Naive thymus-derived CD4-positive, alpha-beta T cell (primary cell): ENCODE measurements at regions of chr17 and their contacts with region 1.

Region 1: GRCh38 chr17:42819944-42820535 is 4.0 kb downstream of the BECN1 start:
- DNase-seq: peak; percentile 16 to 57 (median 34)
- ATAC-seq: no peak
- H3K4me3 ChIP-seq: no peak overlapping the region
- H3K4me3 Mint-ChIP-seq: peak overlapping the region in 2 of 10 donors; percentile 1 to 22
- H3K27ac ChIP-seq: peak overlapping the region; percentile 40
- H3K27ac Mint-ChIP-seq: peak overlapping the region in 4 of 9 donors; percentile 6 to 43 (median 27)
- H3K4me1 ChIP-seq: peaks cover 6 to 12% of the 10 kb centered on the region in 2 donors
- H3K4me1 Mint-ChIP-seq: peaks cover 19 to 42% (median 28%) of the 10 kb centered on the region in 7 donors
- H3K27me3 ChIP-seq: no peaks in the 10 kb centered on the region
- H3K27me3 Mint-ChIP-seq: no peaks in the 10 kb centered on the region

Region 2: GRCh38 chr17:42502091-42502490 is 317.9 kb before region 1 on chr17:
- CTCF ChIA-PET with region 1: no interaction called
- POLR2A ChIA-PET with region 1: no interaction called
- intact Hi-C with region 1: no loop called
- DNase-seq: no peak
- ATAC-seq: no peak
- H3K4me3 ChIP-seq: no peak overlapping the region
- H3K4me3 Mint-ChIP-seq: no peak overlapping the region
- H3K27ac ChIP-seq: no peak overlapping the region
- H3K27ac Mint-ChIP-seq: no peak overlapping the region
- H3K4me1 ChIP-seq: no peaks in the 10 kb centered on the region
- H3K4me1 Mint-ChIP-seq: no peaks in the 10 kb centered on the region
- H3K27me3 ChIP-seq: no peaks in the 10 kb centered on the region
- H3K27me3 Mint-ChIP-seq: no peaks in the 10 kb centered on the region

Region 3: GRCh38 chr17:42591411-42591810 is 228.6 kb before region 1 on chr17:
- CTCF ChIA-PET with region 1: no interaction called
- POLR2A ChIA-PET with region 1: no interaction called
- intact Hi-C with region 1: no loop called
- DNase-seq: no peak
- ATAC-seq: no peak
- H3K4me3 ChIP-seq: no peak overlapping the region
- H3K4me3 Mint-ChIP-seq: no peak overlapping the region
- H3K27ac ChIP-seq: no peak overlapping the region
- H3K27ac Mint-ChIP-seq: no peak overlapping the region
- H3K4me1 ChIP-seq: no peaks in the 10 kb centered on the region
- H3K4me1 Mint-ChIP-seq: peaks cover 5 to 32% (median 22%) of the 10 kb centered on the region in 7 donors
- H3K27me3 ChIP-seq: no peaks in the 10 kb centered on the region
- H3K27me3 Mint-ChIP-seq: no peaks in the 10 kb centered on the region

Region 4: DNA sequence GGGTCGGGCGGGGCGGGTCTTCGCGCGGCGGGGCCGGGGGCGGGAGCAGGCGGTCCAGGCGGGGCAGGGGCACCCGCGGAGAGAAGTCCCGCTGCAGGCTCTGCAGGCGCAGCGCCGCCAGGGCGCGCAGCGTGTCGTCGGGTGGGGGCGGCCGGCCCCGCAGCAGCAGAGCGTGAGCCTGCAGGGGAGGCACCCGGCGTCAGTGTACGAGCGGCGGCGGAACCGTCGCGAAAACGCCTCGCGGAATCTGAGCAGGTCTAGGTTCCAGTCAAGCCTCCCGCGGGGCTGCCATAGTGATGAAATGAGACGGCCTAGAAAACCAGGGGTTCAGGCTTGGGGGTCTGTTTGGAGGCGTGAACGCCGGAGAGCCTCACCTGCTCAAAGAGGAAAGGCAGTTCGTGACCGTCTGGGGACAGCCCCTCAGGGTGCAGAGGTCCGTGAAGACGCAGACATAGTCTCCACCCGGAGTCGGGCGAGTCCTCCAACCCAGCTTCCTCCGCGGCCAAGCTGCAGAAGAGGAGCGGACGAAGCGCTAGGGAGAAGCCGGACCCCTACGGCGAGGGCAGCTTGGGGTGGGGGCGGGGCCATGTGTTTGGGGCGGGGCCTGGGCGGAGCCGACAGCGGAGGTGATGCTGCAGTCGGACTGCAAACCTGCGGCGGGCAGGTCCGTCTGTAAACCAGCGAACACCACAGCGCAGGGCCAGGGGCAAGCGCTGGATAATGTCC is 149.7 kb before region 1 on chr17:
- CTCF ChIA-PET with region 1: no interaction called
- POLR2A ChIA-PET with region 1: interaction called, 3 read pairs
- intact Hi-C with region 1: loop called in 1 of 2 experiments (anchors 2 kb)
- DNase-seq: peak in 8 of 9 donors; percentile 30 to 57 (median 44)
- ATAC-seq: peak; percentile 86
- H3K4me3 ChIP-seq: peak overlapping the region; percentile 47
- H3K4me3 Mint-ChIP-seq: peak overlapping the region; percentile 55 to 85 (median 79)
- H3K27ac ChIP-seq: no peak overlapping the region
- H3K27ac Mint-ChIP-seq: peak overlapping the region in 5 of 9 donors; percentile 18 to 74 (median 39)
- H3K4me1 ChIP-seq: peaks cover 2 to 20% of the 10 kb centered on the region in 2 donors
- H3K4me1 Mint-ChIP-seq: peaks cover 7 to 30% (median 24%) of the 10 kb centered on the region in 7 donors
- H3K27me3 ChIP-seq: peaks cover 0 to 28% of the 10 kb centered on the region in 2 donors
- H3K27me3 Mint-ChIP-seq: peaks cover 19 to 58% (median 26%) of the 10 kb centered on the region in 5 donors

Region 5: DNA sequence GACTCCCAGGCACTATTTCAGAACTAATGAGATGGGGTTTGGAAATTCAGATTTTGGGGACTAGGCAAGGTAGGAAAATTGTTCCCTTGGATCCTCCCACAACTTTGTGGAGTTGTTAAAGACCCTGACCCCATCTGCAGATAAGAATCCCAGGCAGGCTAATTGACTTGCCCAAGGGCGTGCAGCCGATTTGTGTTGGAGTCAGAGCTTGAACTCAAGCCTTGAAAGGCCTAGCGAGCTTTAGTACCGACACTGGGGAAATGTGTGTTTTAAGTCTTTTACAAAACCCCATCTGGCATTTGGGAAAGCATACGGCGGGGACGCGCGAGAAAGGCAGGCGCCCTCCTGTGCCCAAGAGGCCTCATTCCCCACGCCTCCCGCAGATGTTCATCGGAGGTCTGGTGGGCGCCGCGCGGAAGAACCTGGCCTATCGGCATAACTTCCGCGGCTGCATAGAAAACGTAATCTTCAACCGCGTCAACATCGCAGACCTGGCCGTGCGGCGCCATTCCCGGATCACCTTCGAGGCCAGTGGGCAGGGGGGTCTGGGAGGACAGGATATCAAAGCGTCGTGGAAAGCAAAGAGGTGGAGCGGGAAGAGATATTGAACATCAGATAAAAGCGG is 133.4 kb before region 1 on chr17:
- CTCF ChIA-PET with region 1: no interaction called
- POLR2A ChIA-PET with region 1: no interaction called
- intact Hi-C with region 1: no loop called
- DNase-seq: no peak
- ATAC-seq: no peak
- H3K4me3 ChIP-seq: no peak overlapping the region
- H3K4me3 Mint-ChIP-seq: no peak overlapping the region
- H3K27ac ChIP-seq: no peak overlapping the region
- H3K27ac Mint-ChIP-seq: no peak overlapping the region
- H3K4me1 ChIP-seq: peaks cover 9 to 10% of the 10 kb centered on the region in 2 donors
- H3K4me1 Mint-ChIP-seq: peaks cover 15 to 22% (median 18%) of the 10 kb centered on the region in 7 donors
- H3K27me3 ChIP-seq: peaks cover under 1 to 4% of the 10 kb centered on the region in 2 donors
- H3K27me3 Mint-ChIP-seq: peaks cover 13 to 37% (median 15%) of the 10 kb centered on the region in 5 donors

Region 6: GRCh38 chr17:42744806-42745617 is 75.0 kb before region 1 on chr17 and contains the start of gene EZH1:
- CTCF ChIA-PET with region 1: no interaction called
- POLR2A ChIA-PET with region 1: no interaction called
- intact Hi-C with region 1: loop called in 1 of 2 experiments (anchors 1 kb)
- DNase-seq: peak; percentile 88 to 96 (median 94)
- ATAC-seq: peak; percentile 97
- H3K4me3 ChIP-seq: peak within 1 kb of the TSS; percentile 78
- H3K4me3 Mint-ChIP-seq: peak within 1 kb of the TSS; percentile 83 to 99 (median 94)
- H3K27ac ChIP-seq: peak within 1 kb of the TSS; percentile 90
- H3K27ac Mint-ChIP-seq: peak within 1 kb of the TSS; percentile 86 to 97 (median 94)
- H3K4me1 ChIP-seq: peaks cover 12 to 16% of the 10 kb centered on the region in 2 donors
- H3K4me1 Mint-ChIP-seq: peaks cover 15 to 34% (median 22%) of the 10 kb centered on the region in 7 donors
- H3K27me3 ChIP-seq: no peaks in the 10 kb centered on the region
- H3K27me3 Mint-ChIP-seq: peaks cover 0 to 41% (median 11%) of the 10 kb centered on the region in 5 donors
- total RNA-seq, gene EZH1: 50.9 to 212 (median 95.4) TPM

Region 7: GRCh38 chr17:42832974-42833766 is 13.1 kb after region 1 on chr17 and contains the start of gene PSME3:
- CTCF ChIA-PET with region 1: interaction called, 5 read pairs
- POLR2A ChIA-PET with region 1: interaction called, 40 read pairs
- intact Hi-C with region 1: loop called (anchors 1 kb)
- DNase-seq: peak; percentile 83 to 91 (median 89)
- ATAC-seq: peak; percentile 94
- H3K4me3 ChIP-seq: peak within 1 kb of the TSS; percentile 100
- H3K4me3 Mint-ChIP-seq: peak within 1 kb of the TSS; percentile 95 to 98 (median 97)
- H3K27ac ChIP-seq: peak within 1 kb of the TSS; percentile 98
- H3K27ac Mint-ChIP-seq: peak within 1 kb of the TSS; percentile 97 to 100 (median 99)
- H3K4me1 ChIP-seq: peaks cover 10 to 16% of the 10 kb centered on the region in 2 donors
- H3K4me1 Mint-ChIP-seq: peaks cover 11 to 40% (median 33%) of the 10 kb centered on the region in 7 donors
- H3K27me3 ChIP-seq: no peaks in the 10 kb centered on the region
- H3K27me3 Mint-ChIP-seq: peaks cover 0 to 7% (median 2%) of the 10 kb centered on the region in 5 donors
- total RNA-seq, gene PSME3: 53.8 to 116 (median 65.9) TPM

Region 8: GRCh38 chr17:42855048-42855596 is 35.1 kb after region 1 on chr17:
- CTCF ChIA-PET with region 1: no interaction called
- POLR2A ChIA-PET with region 1: no interaction called
- intact Hi-C with region 1: no loop called
- DNase-seq: no peak
- ATAC-seq: peak; percentile 31
- H3K4me3 ChIP-seq: no peak overlapping the region
- H3K4me3 Mint-ChIP-seq: no peak overlapping the region
- H3K27ac ChIP-seq: no peak overlapping the region
- H3K27ac Mint-ChIP-seq: no peak overlapping the region
- H3K4me1 ChIP-seq: no peaks in the 10 kb centered on the region
- H3K4me1 Mint-ChIP-seq: peaks cover 0 to 4% (median 0%) of the 10 kb centered on the region in 7 donors
- H3K27me3 ChIP-seq: no peaks in the 10 kb centered on the region
- H3K27me3 Mint-ChIP-seq: peaks cover 0 to 11% (median 0%) of the 10 kb centered on the region in 5 donors

Region 9: GRCh38 chr17:43125133-43125966 is 305.3 kb after region 1 on chr17 and contains the start of gene BRCA1:
- CTCF ChIA-PET with region 1: no interaction called
- POLR2A ChIA-PET with region 1: no interaction called
- intact Hi-C with region 1: loop called in 1 of 2 experiments (anchors 5 kb)
- DNase-seq: peak; percentile 78 to 98 (median 96)
- ATAC-seq: peak; percentile 100
- H3K4me3 ChIP-seq: peak within 1 kb of the TSS; percentile 83
- H3K4me3 Mint-ChIP-seq: peak within 1 kb of the TSS; percentile 88 to 97 (median 94)
- H3K27ac ChIP-seq: peak within 1 kb of the TSS; percentile 83
- H3K27ac Mint-ChIP-seq: peak within 1 kb of the TSS; percentile 88 to 98 (median 93)
- H3K4me1 ChIP-seq: peaks cover 6 to 8% of the 10 kb centered on the region in 2 donors
- H3K4me1 Mint-ChIP-seq: peaks cover 14 to 39% (median 30%) of the 10 kb centered on the region in 7 donors
- H3K27me3 ChIP-seq: no peaks in the 10 kb centered on the region
- H3K27me3 Mint-ChIP-seq: no peaks in the 10 kb centered on the region
- total RNA-seq, gene BRCA1: 2.6 to 54.1 (median 5.4) TPM

Region 10: DNA sequence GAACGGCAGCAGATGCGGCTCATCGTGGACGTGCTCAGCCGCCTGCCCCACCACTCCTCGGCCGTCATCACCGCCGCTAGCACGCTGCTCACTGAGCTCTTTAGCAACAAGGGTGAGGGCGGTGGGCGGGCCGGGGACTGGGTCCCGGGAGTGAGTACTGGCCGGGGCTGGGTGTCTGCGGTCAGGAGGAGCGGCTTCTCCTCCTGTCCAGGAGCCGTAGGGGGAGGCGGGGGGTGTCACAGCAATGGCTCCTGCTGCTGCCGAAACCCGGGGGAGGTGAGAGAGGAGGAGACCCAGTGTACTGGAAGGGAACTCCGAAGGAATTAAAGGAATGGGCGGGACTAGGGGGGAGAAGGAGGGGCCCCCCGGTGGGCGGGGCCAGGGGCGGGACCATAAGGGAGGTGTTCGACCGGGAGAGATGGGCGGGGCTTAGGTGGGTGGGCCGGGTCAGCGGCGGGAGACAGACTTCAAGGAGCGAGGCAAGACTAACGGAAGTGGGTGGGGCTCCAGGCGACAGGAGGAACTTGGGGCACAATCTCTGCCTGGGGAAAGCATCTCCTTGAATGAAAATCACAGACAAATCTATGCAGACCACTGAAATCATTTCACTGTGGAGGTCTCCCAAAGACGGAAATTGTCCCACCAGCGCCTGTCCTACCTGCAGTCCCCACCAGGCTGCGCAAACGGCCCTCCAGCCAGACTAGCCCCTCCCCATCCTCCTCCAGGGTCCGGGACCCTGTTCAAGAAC is 1186.7 kb after region 1 on chr17:
- CTCF ChIA-PET with region 1: no interaction called
- POLR2A ChIA-PET with region 1: no interaction called
- intact Hi-C with region 1: loop called in 1 of 2 experiments (anchors 5 kb)
- DNase-seq: peak; percentile 77 to 95 (median 86)
- ATAC-seq: peak; percentile 96
- H3K4me3 ChIP-seq: peak overlapping the region; percentile 89
- H3K4me3 Mint-ChIP-seq: peak overlapping the region; percentile 86 to 94 (median 90)
- H3K27ac ChIP-seq: peak overlapping the region; percentile 60
- H3K27ac Mint-ChIP-seq: peak overlapping the region; percentile 44 to 88 (median 68)
- H3K4me1 ChIP-seq: peaks cover 19 to 26% of the 10 kb centered on the region in 2 donors
- H3K4me1 Mint-ChIP-seq: peaks cover 16 to 30% (median 25%) of the 10 kb centered on the region in 7 donors
- H3K27me3 ChIP-seq: no peaks in the 10 kb centered on the region
- H3K27me3 Mint-ChIP-seq: peaks cover 0 to 30% (median 4%) of the 10 kb centered on the region in 5 donors